ENCODE measurements at regions of chr22 and their contacts with region 1.

Region 1: DNA sequence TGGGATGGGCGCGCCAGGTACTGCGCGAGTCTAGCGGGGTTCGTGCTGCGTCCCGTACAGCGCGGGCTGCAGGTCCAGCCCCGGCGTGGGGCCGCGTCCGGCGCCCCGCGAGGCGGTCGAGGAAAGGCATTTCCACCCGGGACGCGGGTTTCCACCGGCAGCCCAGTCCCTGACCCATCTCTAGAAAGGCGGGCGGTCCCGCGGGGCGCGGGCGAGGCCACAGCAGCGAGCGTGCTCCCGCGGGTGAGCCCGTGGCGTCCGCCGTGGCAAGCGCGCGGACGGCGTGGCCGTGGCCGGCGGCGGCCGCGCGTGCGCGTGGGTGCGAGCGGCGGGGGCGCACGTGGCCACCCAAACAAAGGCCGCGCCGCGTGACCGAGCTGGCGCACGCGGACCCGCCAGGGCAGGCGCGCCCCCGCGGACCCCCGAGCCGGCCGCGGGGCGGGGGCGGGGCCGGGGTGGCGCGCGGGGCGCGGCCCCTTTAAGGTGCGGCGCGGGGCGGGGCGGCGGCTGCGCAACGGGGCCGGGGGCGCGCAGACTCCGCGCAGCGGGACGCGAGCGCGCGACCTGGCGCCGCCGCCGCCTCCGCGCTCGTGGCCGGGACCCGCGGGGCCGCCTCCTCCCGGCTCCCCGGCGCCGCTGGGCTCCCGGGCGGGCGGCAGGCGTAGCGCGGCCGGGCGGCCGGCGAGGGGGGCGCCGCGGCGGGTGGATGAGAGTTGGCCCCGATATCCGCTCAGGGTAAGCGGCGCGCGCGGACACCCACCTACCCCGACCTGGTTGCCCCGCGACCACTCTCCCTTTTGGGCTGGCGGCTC is 39.3 kb upstream of the CELSR1 start:
- DNase-seq: peak; percentile 50 to 83 (median 75)
- ATAC-seq: peak in 2 of 4 donors; percentile 21 to 23
- H3K4me3 ChIP-seq: peak overlapping the region; percentile 64 to 89 (median 80)
- H3K27ac ChIP-seq: peak overlapping the region; percentile 69 to 96 (median 87)
- H3K4me1 ChIP-seq: peaks cover 24 to 79% (median 63%) of the 10 kb centered on the region in 12 donors
- H3K27me3 ChIP-seq: no peaks in the 10 kb centered on the region
- CTCF ChIP-seq: no peak
- POLR2A ChIP-seq: no peak

Region 2: DNA sequence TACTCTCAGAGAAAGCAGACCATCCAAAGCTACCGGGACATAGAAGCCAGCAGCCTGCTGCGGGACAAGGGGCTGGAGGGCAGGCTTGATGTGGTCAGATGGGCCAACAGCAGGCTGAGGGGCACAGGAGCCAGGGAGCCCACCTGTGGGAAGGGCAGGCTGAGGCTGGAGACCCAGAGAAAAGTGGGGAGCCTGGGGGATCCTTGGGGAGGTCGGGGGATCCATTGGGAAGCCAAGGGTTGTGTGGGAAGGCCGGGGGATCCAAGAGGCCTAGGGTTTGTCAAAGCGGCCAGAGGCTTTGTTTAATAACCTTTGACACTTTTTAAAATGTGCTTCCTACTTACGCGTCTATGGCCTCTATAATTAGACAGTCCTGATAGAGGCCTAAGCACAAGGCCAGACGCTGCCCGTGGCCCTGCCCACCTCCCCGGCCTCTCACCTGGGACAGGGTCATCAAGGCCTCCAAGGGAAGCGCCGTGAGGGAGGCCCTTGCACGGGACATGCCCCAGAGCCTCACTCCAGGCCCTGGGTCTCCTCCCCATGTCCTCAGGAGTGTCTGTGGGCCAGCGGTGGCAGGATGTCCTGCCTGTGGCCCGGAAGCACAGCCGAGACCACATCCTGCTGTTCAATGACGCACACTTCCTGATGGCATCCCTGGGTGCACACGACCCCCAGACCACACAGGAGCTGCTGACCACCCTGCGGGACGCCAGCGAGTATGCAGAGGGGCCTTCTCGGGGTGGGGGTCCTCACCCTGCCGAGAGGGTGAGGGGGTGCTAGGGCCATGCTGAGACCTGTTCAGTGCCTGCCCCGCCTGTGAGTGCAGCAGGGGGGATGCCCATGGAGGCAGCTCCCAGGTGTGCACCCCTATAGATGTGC is 288.6 kb before region 1 on chr22:
- intact Hi-C with region 1: no loop called
- DNase-seq: peak; percentile 38 to 77 (median 50)
- ATAC-seq: peak in 3 of 4 donors; percentile 38 to 71 (median 50)
- H3K4me3 ChIP-seq: peak overlapping the region in 10 of 12 donors; percentile 21 to 49 (median 36)
- H3K27ac ChIP-seq: peak overlapping the region; percentile 41 to 86 (median 74)
- H3K4me1 ChIP-seq: peaks cover 0 to 43% (median 18%) of the 10 kb centered on the region in 12 donors
- H3K27me3 ChIP-seq: no peaks in the 10 kb centered on the region
- CTCF ChIP-seq: no peak
- POLR2A ChIP-seq: no peak

Region 3: DNA sequence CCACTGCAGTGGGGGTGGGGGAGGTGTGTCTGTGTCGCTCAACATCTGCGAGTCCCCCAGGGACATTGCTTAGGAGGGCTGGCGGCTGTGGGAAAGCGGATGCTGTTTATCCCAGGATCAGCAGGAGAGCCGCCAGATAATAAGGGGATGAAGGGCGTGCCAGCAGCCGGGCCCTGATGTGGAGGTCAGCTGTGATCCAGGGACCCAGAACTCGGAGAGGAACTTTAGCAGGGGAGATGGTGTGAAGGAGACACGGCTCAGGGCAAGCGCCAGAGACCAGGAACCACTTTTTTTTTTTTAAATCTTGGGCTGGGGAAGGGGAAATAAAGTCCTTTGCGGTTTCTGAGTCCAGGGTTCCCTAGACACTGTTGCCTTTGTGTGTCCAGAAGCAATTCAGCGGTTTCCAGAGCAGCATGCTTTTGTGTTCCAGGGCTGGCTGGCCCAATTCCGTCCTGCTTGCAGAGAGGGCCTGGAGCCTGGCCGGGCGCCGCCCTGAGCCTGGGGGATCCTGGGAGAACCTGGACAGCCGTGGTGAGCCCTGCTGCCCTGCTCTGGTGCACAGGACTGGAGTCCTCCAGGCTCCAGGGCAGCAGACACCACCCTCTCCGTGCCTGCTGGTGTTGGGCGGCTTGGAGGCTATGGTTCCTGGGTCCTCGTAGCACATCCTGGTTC is 43.2 kb after region 1 on chr22 and contains the start of gene GRAMD4:
- intact Hi-C with region 1: loop called in 4 of 10 experiments (anchors 5 kb)
- DNase-seq: peak; percentile 64 to 85 (median 76)
- ATAC-seq: peak; percentile 15 to 59 (median 35)
- H3K4me3 ChIP-seq: peak within 1 kb of the TSS in 1 of 12 donors; percentile 37
- H3K27ac ChIP-seq: peak within 1 kb of the TSS; percentile 47 to 92 (median 84)
- H3K4me1 ChIP-seq: peaks cover 15 to 74% (median 58%) of the 10 kb centered on the region in 12 donors
- H3K27me3 ChIP-seq: no peaks in the 10 kb centered on the region
- CTCF ChIP-seq: no peak
- POLR2A ChIP-seq: no peak
- total RNA-seq, gene GRAMD4: 31.2 to 122 (median 72.5) TPM

Region 4: GRCh38 chr22:46666577-46667244 is 89.9 kb after region 1 on chr22:
- intact Hi-C with region 1: loop called in 1 of 10 experiments (anchors 5 kb)
- DNase-seq: peak in 1 of 5 donors; percentile 13
- ATAC-seq: no peak
- H3K4me3 ChIP-seq: no peak overlapping the region
- H3K27ac ChIP-seq: no peak overlapping the region
- H3K4me1 ChIP-seq: peaks cover 0 to 23% (median 5%) of the 10 kb centered on the region in 12 donors
- H3K27me3 ChIP-seq: no peaks in the 10 kb centered on the region
- CTCF ChIP-seq: no peak
- POLR2A ChIP-seq: no peak

Region 5: DNA sequence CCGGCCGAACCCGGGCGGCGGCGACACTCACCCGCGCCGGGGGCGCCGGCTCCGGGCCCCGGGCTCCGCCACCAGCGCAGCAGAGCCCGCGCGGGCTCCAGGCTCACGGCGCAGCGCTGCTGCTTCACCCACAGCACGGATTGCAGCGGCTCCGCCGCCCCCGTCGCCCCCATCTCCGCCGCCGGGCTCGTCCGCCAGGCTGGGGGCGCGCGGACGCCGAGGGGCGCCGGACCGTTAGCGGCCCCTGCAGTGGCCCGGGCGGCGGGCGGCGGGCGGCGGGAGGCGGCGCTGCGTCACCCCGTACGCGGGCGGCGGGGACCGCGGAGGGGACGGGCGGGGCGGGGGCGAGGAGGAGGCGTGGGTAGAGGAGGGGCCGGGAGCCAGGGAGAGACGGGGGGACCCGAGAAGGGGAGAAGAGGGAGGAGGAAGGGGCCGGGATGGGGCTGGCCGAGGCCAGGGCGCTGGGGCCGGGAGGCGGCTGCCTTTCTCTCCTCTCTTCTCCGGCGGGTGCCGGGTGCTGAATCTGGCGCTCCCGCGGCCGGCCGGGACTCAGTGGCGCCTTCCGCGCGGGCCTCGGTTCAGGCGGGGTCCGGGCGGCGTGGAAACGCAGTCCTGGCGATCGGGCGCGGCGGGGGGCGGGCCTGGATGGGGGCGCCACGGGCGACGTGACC is 161.3 kb after region 1 on chr22 and contains the start of gene CERK:
- intact Hi-C with region 1: loop called in 5 of 10 experiments (anchors 5 kb)
- DNase-seq: peak; percentile 86 to 94 (median 90)
- ATAC-seq: peak; percentile 52 to 77 (median 70)
- H3K4me3 ChIP-seq: peak within 1 kb of the TSS; percentile 57 to 100 (median 92)
- H3K27ac ChIP-seq: peak within 1 kb of the TSS; percentile 90 to 100 (median 98)
- H3K4me1 ChIP-seq: peaks cover 9 to 87% (median 56%) of the 10 kb centered on the region in 12 donors
- H3K27me3 ChIP-seq: no peaks in the 10 kb centered on the region
- CTCF ChIP-seq: no peak
- POLR2A ChIP-seq: peak in 1 of 2 donors; percentile 87
- total RNA-seq, gene CERK: 52.6 to 125 (median 72.3) TPM